ENCODE measurements at regions of chr1 and their contacts with region 1.

Region 1: DNA sequence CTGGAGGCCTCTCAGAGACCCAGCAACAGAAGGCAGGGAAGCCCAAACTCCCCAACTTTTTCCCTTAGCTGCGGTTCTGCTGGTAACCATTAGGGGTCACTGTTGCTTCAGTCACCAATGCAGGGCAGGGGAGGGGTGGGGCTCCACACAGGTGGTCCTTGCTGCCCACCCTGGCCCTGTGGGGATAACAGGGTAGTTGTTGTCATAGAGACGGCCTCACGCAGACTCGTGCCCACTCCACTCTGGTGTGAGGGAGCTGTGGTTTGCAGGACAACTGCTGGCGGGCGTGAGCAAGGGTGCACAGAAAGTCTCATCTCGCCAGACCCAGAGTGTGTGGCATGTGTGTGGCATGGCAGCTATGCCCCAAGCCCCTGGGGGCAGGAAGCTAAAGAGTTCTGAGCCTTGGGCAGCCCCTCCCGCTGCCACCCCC is 19.9 kb downstream of the INSRR start:
- DNase-seq: peak in 8 of 9 donors; percentile 30 to 74 (median 50)
- ATAC-seq: peak; percentile 75
- H3K4me3 ChIP-seq: no peak overlapping the region
- H3K4me3 Mint-ChIP-seq: peak overlapping the region in 1 of 10 donors; percentile 34
- H3K27ac ChIP-seq: no peak overlapping the region
- H3K27ac Mint-ChIP-seq: peak overlapping the region in 3 of 9 donors; percentile 47 to 81 (median 48)
- H3K4me1 ChIP-seq: peaks cover 0 to 8% of the 10 kb centered on the region in 2 donors
- H3K4me1 Mint-ChIP-seq: peaks cover 1 to 52% (median 2%) of the 10 kb centered on the region in 7 donors
- H3K27me3 ChIP-seq: no peaks in the 10 kb centered on the region
- H3K27me3 Mint-ChIP-seq: peaks cover 24 to 43% (median 33%) of the 10 kb centered on the region in 5 donors

Region 2: GRCh38 chr1:156524481-156524869 is 314.5 kb before region 1 on chr1:
- CTCF ChIA-PET with region 1: no interaction called
- POLR2A ChIA-PET with region 1: no interaction called
- intact Hi-C with region 1: no loop called
- DNase-seq: peak in 1 of 9 donors; percentile 14
- ATAC-seq: peak; percentile 71
- H3K4me3 ChIP-seq: no peak overlapping the region
- H3K4me3 Mint-ChIP-seq: peak overlapping the region in 9 of 10 donors; percentile 27 to 71 (median 58)
- H3K27ac ChIP-seq: no peak overlapping the region
- H3K27ac Mint-ChIP-seq: peak overlapping the region; percentile 4 to 86 (median 57)
- H3K4me1 ChIP-seq: peaks cover 23 to 31% of the 10 kb centered on the region in 2 donors
- H3K4me1 Mint-ChIP-seq: peaks cover 34 to 43% (median 36%) of the 10 kb centered on the region in 7 donors
- H3K27me3 ChIP-seq: no peaks in the 10 kb centered on the region
- H3K27me3 Mint-ChIP-seq: no peaks in the 10 kb centered on the region

Region 3: DNA sequence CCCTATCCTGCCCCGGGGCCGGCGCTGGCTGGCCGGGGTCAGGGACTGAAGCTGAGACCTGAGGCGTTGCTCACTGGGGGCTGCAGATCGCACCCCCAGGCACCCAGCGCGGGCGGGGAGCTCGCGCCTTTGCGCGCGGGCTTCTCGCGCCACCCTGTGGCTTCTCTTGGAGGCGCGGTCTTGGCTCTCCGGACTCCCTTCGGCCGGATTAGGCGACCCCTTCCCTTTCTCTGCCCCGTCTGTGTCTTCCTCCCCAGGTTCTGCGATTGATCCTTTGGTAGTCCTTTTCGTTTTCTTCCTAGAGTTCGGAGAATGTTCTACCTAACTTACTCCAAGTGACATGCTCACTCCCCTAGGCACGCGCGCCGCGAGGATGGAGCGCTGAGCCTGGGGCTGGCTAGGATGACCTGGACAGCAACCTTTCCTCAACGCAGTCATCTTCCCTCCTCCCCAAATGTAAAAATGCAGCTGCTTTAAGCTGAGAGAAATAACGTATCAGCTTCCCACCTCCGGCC is 21.2 kb after region 1 on chr1:
- CTCF ChIA-PET with region 1: interaction called, 73 read pairs
- POLR2A ChIA-PET with region 1: no interaction called
- intact Hi-C with region 1: loop called (anchors 1 kb)
- DNase-seq: peak; percentile 21 to 77 (median 45)
- ATAC-seq: peak; percentile 71
- H3K4me3 ChIP-seq: peak overlapping the region; percentile 68
- H3K4me3 Mint-ChIP-seq: peak overlapping the region; percentile 70 to 92 (median 83)
- H3K27ac ChIP-seq: no peak overlapping the region
- H3K27ac Mint-ChIP-seq: peak overlapping the region in 5 of 9 donors; percentile 13 to 73 (median 59)
- H3K4me1 ChIP-seq: peaks cover 5 to 20% of the 10 kb centered on the region in 2 donors
- H3K4me1 Mint-ChIP-seq: peaks cover 17 to 64% (median 24%) of the 10 kb centered on the region in 7 donors
- H3K27me3 ChIP-seq: peaks cover 12 to 31% of the 10 kb centered on the region in 2 donors
- H3K27me3 Mint-ChIP-seq: peaks cover 43 to 53% (median 51%) of the 10 kb centered on the region in 5 donors

Region 4: GRCh38 chr1:156927215-156928042 is 88.4 kb after region 1 on chr1:
- CTCF ChIA-PET with region 1: interaction called, 6 read pairs
- POLR2A ChIA-PET with region 1: no interaction called
- intact Hi-C with region 1: loop called in 1 of 2 experiments (anchors 1 kb)
- DNase-seq: peak; percentile 42 to 72 (median 59)
- ATAC-seq: peak; percentile 76
- H3K4me3 ChIP-seq: no peak overlapping the region
- H3K4me3 Mint-ChIP-seq: peak overlapping the region; percentile 13 to 83 (median 65)
- H3K27ac ChIP-seq: no peak overlapping the region
- H3K27ac Mint-ChIP-seq: peak overlapping the region in 2 of 9 donors; percentile 29 to 59
- H3K4me1 ChIP-seq: peaks cover 0 to 8% of the 10 kb centered on the region in 2 donors
- H3K4me1 Mint-ChIP-seq: peaks cover 18 to 35% (median 31%) of the 10 kb centered on the region in 7 donors
- H3K27me3 ChIP-seq: peaks cover 16 to 27% of the 10 kb centered on the region in 2 donors
- H3K27me3 Mint-ChIP-seq: peaks cover 72 to 91% (median 81%) of the 10 kb centered on the region in 5 donors